ENCODE measurements at regions of chr3 and their contacts with region 1.

Region 1: GRCh38 chr3:132722164-132723024 is at the start of gene NPHP3:
- DNase-seq: peak; percentile 75 to 95 (median 87)
- ATAC-seq: peak; percentile 87
- H3K4me3 ChIP-seq: peak within 1 kb of the TSS; percentile 88
- H3K4me3 Mint-ChIP-seq: peak within 1 kb of the TSS; percentile 86 to 95 (median 92)
- H3K27ac ChIP-seq: peak within 1 kb of the TSS; percentile 85
- H3K27ac Mint-ChIP-seq: peak within 1 kb of the TSS; percentile 84 to 95 (median 89)
- H3K4me1 ChIP-seq: peaks cover 16 to 26% of the 10 kb centered on the region in 2 donors
- H3K4me1 Mint-ChIP-seq: peaks cover 17 to 49% (median 43%) of the 10 kb centered on the region in 7 donors
- H3K27me3 ChIP-seq: no peaks in the 10 kb centered on the region
- H3K27me3 Mint-ChIP-seq: peaks cover 0 to 6% (median 0%) of the 10 kb centered on the region in 5 donors
- total RNA-seq, gene NPHP3: 21.8 to 78.9 (median 26.1) TPM

Region 2: GRCh38 chr3:131381444-131382291 is 1340.7 kb before region 1 on chr3 and contains the start of gene NUDT16:
- CTCF ChIA-PET with region 1: no interaction called
- POLR2A ChIA-PET with region 1: no interaction called
- intact Hi-C with region 1: loop called in 1 of 2 experiments (anchors 2 kb)
- DNase-seq: peak; percentile 86 to 97 (median 91)
- ATAC-seq: peak; percentile 99
- H3K4me3 ChIP-seq: peak within 1 kb of the TSS; percentile 90
- H3K4me3 Mint-ChIP-seq: peak within 1 kb of the TSS; percentile 93 to 98 (median 96)
- H3K27ac ChIP-seq: peak within 1 kb of the TSS; percentile 69
- H3K27ac Mint-ChIP-seq: peak within 1 kb of the TSS; percentile 90 to 98 (median 95)
- H3K4me1 ChIP-seq: peaks cover 6 to 14% of the 10 kb centered on the region in 2 donors
- H3K4me1 Mint-ChIP-seq: peaks cover 30 to 51% (median 42%) of the 10 kb centered on the region in 7 donors
- H3K27me3 ChIP-seq: no peaks in the 10 kb centered on the region
- H3K27me3 Mint-ChIP-seq: no peaks in the 10 kb centered on the region
- total RNA-seq, gene NUDT16: 7.1 to 14.5 (median 12.9) TPM

Region 3: GRCh38 chr3:133377396-133377795 is 655.0 kb after region 1 on chr3:
- CTCF ChIA-PET with region 1: no interaction called
- POLR2A ChIA-PET with region 1: no interaction called
- intact Hi-C with region 1: loop called in 1 of 2 experiments (anchors 2 kb)
- DNase-seq: no peak
- ATAC-seq: no peak
- H3K4me3 ChIP-seq: no peak overlapping the region
- H3K4me3 Mint-ChIP-seq: no peak overlapping the region
- H3K27ac ChIP-seq: no peak overlapping the region
- H3K27ac Mint-ChIP-seq: no peak overlapping the region
- H3K4me1 ChIP-seq: no peaks in the 10 kb centered on the region
- H3K4me1 Mint-ChIP-seq: no peaks in the 10 kb centered on the region
- H3K27me3 ChIP-seq: no peaks in the 10 kb centered on the region
- H3K27me3 Mint-ChIP-seq: peaks cover 0 to 3% (median 0%) of the 10 kb centered on the region in 5 donors

Region 4: DNA sequence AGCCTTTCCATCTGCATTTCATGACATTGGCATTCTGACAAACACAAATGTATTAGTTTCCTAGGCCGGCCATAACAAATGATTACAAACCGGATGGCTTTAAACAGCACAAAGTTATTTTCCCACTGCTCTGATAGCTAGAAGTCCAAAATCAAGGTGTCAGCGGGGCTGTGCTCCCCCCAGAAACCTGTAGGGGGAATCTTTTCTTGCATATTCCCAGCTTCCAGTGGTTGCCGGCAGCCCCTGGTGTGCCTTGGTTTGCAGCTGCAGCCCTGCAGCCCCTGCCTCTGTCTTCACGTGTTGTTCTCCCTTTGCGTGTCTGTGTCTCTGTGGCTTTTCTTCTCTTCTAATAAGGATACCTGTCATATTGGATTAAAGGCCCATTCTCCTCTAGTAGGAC is 772.1 kb after region 1 on chr3:
- CTCF ChIA-PET with region 1: interaction called, 5 read pairs
- POLR2A ChIA-PET with region 1: no interaction called
- intact Hi-C with region 1: loop called in 1 of 2 experiments (anchors 5 kb)
- DNase-seq: no peak
- ATAC-seq: no peak
- H3K4me3 ChIP-seq: no peak overlapping the region
- H3K4me3 Mint-ChIP-seq: peak overlapping the region in 3 of 10 donors; percentile 5 to 56 (median 12)
- H3K27ac ChIP-seq: no peak overlapping the region
- H3K27ac Mint-ChIP-seq: peak overlapping the region in 5 of 9 donors; percentile 6 to 61 (median 23)
- H3K4me1 ChIP-seq: peaks cover 21 to 48% of the 10 kb centered on the region in 2 donors
- H3K4me1 Mint-ChIP-seq: peaks cover 30 to 60% (median 57%) of the 10 kb centered on the region in 7 donors
- H3K27me3 ChIP-seq: no peaks in the 10 kb centered on the region
- H3K27me3 Mint-ChIP-seq: no peaks in the 10 kb centered on the region

Region 5: GRCh38 chr3:133927540-133928066 is 1205.2 kb after region 1 on chr3:
- CTCF ChIA-PET with region 1: interaction called, 4 read pairs
- POLR2A ChIA-PET with region 1: no interaction called
- intact Hi-C with region 1: loop called (anchors 1 to 2 kb)
- DNase-seq: peak; percentile 64 to 88 (median 81)
- ATAC-seq: peak; percentile 97
- H3K4me3 ChIP-seq: peak overlapping the region; percentile 51
- H3K4me3 Mint-ChIP-seq: peak overlapping the region; percentile 58 to 85 (median 74)
- H3K27ac ChIP-seq: peak overlapping the region; percentile 43
- H3K27ac Mint-ChIP-seq: peak overlapping the region in 2 of 9 donors; percentile 56 to 69
- H3K4me1 ChIP-seq: peaks cover 0 to 4% of the 10 kb centered on the region in 2 donors
- H3K4me1 Mint-ChIP-seq: peaks cover 4 to 14% (median 5%) of the 10 kb centered on the region in 7 donors
- H3K27me3 ChIP-seq: peaks cover 0 to 3% of the 10 kb centered on the region in 2 donors
- H3K27me3 Mint-ChIP-seq: peaks cover 5 to 26% (median 10%) of the 10 kb centered on the region in 5 donors

Measured in naive thymus-derived CD4-positive, alpha-beta T cell (primary cell).